AG04450 (cell line): ENCODE measurements at regions of chr20 and their contacts with region 1.

Region 1: GRCh38 chr20:61976644-61977490 is 88.8 kb downstream of the TAF4 start:
- DNase-seq: no peak
- H3K4me3 ChIP-seq: no peak overlapping the region
- H3K27ac ChIP-seq: no peak overlapping the region
- H3K27me3 ChIP-seq: no peaks in the 10 kb centered on the region
- CTCF ChIP-seq: no peak

Region 2: GRCh38 chr20:62156592-62157386 is 179.9 kb after region 1 on chr20:
- CTCF ChIA-PET with region 1: interaction called, 10 read pairs
- POLR2A ChIA-PET with region 1: no interaction called
- DNase-seq: no peak
- H3K4me3 ChIP-seq: no peak overlapping the region
- H3K27ac ChIP-seq: peak overlapping the region; percentile 11
- H3K27me3 ChIP-seq: no peaks in the 10 kb centered on the region
- CTCF ChIP-seq: peak; percentile 66